ENCODE measurements at regions of chr6 and their contacts with region 1.

Region 1: DNA sequence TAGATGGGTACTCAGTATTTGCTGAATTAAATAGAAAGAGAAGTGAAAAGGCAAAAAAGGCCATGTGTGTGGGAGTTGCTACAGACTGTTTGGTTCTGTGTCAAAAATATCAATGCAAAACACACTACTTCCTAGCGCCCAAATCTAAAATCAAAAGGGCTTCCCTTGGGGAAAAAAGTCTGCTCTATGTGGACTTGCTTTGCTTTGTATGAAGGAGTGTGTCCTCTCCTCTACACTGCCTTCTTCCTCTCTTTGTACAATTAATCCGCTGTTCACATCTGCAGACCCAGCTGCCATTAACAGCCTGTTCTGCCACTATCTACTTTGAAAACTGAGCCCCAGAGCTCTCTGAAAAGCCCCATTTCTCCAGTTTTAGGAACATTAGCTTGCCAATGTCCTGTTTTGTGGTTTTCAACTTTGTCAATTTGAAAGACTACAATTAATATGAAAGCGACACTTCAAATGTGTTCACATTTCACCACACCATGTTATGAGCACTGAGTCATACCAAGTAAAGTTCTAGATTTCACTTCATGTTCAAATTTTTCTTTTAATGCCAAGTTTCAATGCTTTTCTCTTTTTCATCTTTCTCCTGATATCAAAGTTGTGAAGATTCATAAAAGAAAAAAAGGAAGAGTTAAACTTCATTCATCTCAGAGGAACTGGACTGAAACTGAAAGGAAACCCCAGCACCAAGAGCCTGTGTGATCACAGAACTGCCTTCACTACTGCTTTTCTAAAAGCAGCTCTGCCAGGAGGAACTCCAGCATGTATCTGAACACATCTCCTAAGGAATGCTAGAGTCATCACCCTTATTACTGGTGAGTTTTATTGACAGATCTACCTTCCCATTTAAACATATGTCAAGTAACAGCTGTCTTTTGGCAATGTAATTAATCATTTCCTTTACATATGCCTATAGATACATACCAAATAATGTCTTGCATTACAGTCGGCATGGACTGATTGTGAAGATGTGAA is 102.6 kb downstream of the KIF13A start:
- DNase-seq: no peak
- ATAC-seq: peak; percentile 83
- H3K4me3 Mint-ChIP-seq: no peak overlapping the region
- H3K27ac Mint-ChIP-seq: no peak overlapping the region
- H3K4me1 Mint-ChIP-seq: peaks cover 21% of the 10 kb centered on the region
- H3K27me3 Mint-ChIP-seq: peaks cover 47% of the 10 kb centered on the region

Region 2: GRCh38 chr6:17987576-17988421 is 103.0 kb after region 1 on chr6 and contains the start of gene KIF13A:
- CTCF ChIA-PET with region 1: no interaction called
- POLR2A ChIA-PET with region 1: no interaction called
- intact Hi-C with region 1: loop called (anchors 2 to 10 kb)
- DNase-seq: peak; percentile 70
- ATAC-seq: peak; percentile 66
- H3K4me3 Mint-ChIP-seq: peak within 1 kb of the TSS; percentile 70
- H3K27ac Mint-ChIP-seq: no peak within 1 kb of the TSS
- H3K4me1 Mint-ChIP-seq: peaks cover 9% of the 10 kb centered on the region
- H3K27me3 Mint-ChIP-seq: peaks cover 57% of the 10 kb centered on the region
- total RNA-seq, gene KIF13A: 0.07 TPM in 1 of 2 experiments, not detected in the other

Region 3: GRCh38 chr6:18115356-18115755 is 230.6 kb after region 1 on chr6:
- CTCF ChIA-PET with region 1: no interaction called
- POLR2A ChIA-PET with region 1: interaction called, 3 read pairs
- intact Hi-C with region 1: loop called (anchors 5 kb)
- DNase-seq: peak; percentile 8
- ATAC-seq: peak; percentile 87
- H3K4me3 Mint-ChIP-seq: no peak overlapping the region
- H3K27ac Mint-ChIP-seq: no peak overlapping the region
- H3K4me1 Mint-ChIP-seq: peaks cover 12% of the 10 kb centered on the region
- H3K27me3 Mint-ChIP-seq: peaks cover 51% of the 10 kb centered on the region

Measured in activated CD4-positive, alpha-beta T cell treated with anti-CD3 and anti-CD28 coated beads for 36 hours (primary cell).